ENCODE measurements at regions of chr17 and their contacts with region 1.

Region 1: DNA sequence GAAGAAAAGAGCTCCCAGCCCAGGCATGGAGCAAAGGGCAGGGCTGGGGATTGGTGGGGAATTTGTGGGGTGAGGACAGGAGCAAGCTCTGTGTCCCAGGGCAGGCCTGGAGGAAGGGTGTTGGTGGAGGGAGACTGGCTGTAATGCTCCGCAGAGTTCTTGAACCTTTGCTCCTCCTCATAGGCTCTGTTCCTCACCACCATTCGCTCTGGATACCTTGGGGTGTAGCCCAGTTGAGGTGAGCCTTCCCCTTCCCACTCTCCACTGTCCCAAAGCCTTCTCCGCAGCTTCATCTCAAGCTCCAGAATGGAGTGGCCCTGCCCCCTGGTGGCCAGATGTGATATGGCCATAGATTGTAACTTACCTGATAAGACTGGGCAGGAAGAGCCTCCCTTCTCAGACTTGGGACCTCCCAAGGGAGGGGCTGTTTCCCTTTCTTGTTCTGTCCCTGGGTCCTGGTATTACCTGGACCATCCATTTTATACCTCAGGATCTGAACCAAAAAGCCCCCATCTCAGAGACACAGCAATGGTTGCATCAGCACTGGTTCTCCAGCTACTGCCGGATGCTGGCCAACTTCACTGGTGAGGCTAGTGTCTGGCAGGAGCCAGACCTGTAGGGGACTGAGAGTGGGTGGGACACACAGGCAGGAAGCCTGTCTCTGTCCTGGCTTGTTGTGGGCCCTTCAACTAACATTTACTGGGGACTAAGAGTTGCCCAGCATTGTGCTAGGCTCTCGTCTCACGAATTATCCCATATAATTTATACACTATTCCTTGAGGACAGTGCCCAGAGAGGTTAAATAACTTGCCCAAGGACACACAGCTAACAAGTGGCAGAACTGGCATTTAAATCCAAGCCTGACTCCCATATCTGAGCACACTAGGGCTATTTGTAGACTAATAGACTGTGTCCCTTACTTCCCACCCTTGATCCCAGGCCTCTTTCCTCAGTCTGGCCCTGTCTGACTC is 19.1 kb upstream of the STAC2 start:
- DNase-seq: peak; percentile 90
- H3K4me3 ChIP-seq: no peak overlapping the region
- H3K27ac ChIP-seq: no peak overlapping the region
- H3K4me1 ChIP-seq: peaks cover 0 to 4% (median 0%) of the 10 kb centered on the region in 4 donors
- H3K27me3 ChIP-seq: peaks cover 6% of the 10 kb centered on the region
- CTCF ChIP-seq: peak; percentile 91 to 97 (median 94)
- EP300 ChIP-seq: no peak
- POLR2A ChIP-seq: no peak

Region 2: DNA sequence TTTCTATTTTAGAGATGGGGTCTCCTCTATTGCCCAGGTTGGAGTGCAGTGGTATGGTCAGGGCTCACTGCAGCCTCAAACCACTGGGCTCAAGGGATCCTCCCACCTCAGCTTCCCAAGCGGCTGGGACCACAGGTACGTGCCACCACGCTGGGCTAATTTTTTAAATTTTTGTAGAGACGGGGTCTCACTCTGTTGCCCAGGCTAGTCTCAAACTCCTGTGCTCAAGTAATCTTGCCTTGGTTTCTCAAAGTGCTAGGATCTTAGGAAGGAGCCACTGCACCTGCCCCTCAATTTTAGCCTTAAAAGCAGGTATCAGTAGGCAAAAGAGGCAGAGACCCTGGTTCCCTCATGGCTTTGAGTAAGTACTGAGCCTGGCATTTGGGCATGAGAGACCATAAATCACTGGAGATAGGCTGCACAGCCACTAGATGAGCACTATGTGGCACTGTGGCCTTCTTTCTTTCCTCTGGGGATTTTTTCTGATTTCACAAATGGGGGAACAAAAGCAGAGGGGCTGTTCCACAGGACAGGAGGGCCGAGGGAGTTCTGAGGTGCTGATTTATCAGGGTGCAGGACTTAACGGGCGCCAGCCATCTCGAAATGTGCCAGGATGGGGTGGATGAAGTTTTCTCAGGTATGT is 175.7 kb before region 1 on chr17:
- in situ Hi-C with region 1: no loop called
- intact Hi-C with region 1: no loop called
- DNase-seq: no peak
- H3K4me3 ChIP-seq: no peak overlapping the region
- H3K27ac ChIP-seq: no peak overlapping the region
- H3K4me1 ChIP-seq: no peaks in the 10 kb centered on the region
- H3K27me3 ChIP-seq: no peaks in the 10 kb centered on the region
- CTCF ChIP-seq: peak; percentile 44 to 55 (median 52)
- EP300 ChIP-seq: no peak
- POLR2A ChIP-seq: no peak

Region 3: GRCh38 chr17:39209317-39210092 is 35.4 kb before region 1 on chr17:
- in situ Hi-C with region 1: no loop called
- intact Hi-C with region 1: loop called (anchors 5 kb)
- DNase-seq: peak; percentile 70
- H3K4me3 ChIP-seq: peak overlapping the region; percentile 4 to 42 (median 32)
- H3K27ac ChIP-seq: peak overlapping the region in 3 of 4 donors; percentile 2 to 39 (median 17)
- H3K4me1 ChIP-seq: peaks cover 16 to 31% (median 20%) of the 10 kb centered on the region in 4 donors
- H3K27me3 ChIP-seq: no peaks in the 10 kb centered on the region
- CTCF ChIP-seq: no peak
- EP300 ChIP-seq: no peak
- POLR2A ChIP-seq: no peak

Region 4: GRCh38 chr17:39306509-39307212 is 61.8 kb after region 1 on chr17:
- in situ Hi-C with region 1: no loop called
- intact Hi-C with region 1: no loop called
- DNase-seq: no peak
- H3K4me3 ChIP-seq: no peak overlapping the region
- H3K27ac ChIP-seq: no peak overlapping the region
- H3K4me1 ChIP-seq: peaks cover 0 to 8% (median 3%) of the 10 kb centered on the region in 4 donors
- H3K27me3 ChIP-seq: no peaks in the 10 kb centered on the region
- CTCF ChIP-seq: no peak
- EP300 ChIP-seq: no peak
- POLR2A ChIP-seq: no peak